HCT116 (cell line): ENCODE measurements at regions of chr5 and their contacts with region 1.

Region 1: DNA sequence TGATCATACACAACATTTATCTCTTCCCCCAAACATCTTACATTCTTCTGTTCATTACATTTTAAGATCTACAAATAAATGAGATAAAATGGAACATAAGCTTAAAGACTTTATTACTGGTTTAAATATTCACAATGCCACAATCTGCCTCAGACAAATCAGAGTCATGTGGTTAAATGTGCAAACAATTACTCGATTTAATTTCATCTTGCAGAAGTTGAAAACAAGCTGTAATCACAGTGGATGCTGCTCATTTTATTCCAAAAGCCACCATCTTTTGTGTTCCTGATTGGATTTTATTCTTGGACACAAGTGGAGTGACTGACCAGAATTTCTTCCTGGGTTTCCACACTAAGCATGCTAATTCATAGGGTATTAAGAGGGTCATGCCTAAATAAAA is 33.2 kb downstream of the SPOCK1 start:
- DNase-seq: no peak
- ATAC-seq: no peak
- H3K4me3 ChIP-seq: no peak overlapping the region
- H3K27ac ChIP-seq: no peak overlapping the region
- H3K4me1 ChIP-seq: no peaks in the 10 kb centered on the region
- H3K27me3 ChIP-seq: peaks cover 47% of the 10 kb centered on the region
- CTCF ChIP-seq: no peak
- POLR2A ChIP-seq: no peak
- RAD21 ChIP-seq: no peak

Region 2: DNA sequence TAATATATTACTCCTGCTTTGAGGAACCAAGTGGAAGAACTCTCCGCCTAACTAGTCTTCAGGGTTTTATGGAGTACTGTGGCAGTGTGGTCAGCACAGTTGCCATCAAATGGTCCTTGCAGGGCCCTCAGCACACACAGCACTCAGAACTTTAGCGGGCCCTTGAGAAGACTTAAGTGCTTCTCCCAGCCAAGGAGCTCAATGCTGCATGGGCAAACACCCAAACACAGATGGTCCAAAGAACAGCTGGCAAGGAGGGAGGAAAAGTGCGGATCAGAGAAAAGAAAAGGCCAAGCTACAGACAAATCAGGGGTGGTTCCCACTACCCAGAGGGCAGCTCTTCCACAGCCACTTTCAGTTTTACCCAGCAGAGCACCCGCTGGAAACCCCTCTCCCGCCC is 65.4 kb before region 1 on chr5:
- CTCF ChIA-PET with region 1: no interaction called
- POLR2A ChIA-PET with region 1: no interaction called
- RAD21 ChIA-PET with region 1: no interaction called
- intact Hi-C with region 1: no loop called
- DNase-seq: no peak
- ATAC-seq: no peak
- H3K4me3 ChIP-seq: no peak overlapping the region
- H3K27ac ChIP-seq: no peak overlapping the region
- H3K4me1 ChIP-seq: no peaks in the 10 kb centered on the region
- H3K27me3 ChIP-seq: peaks cover 58% of the 10 kb centered on the region
- CTCF ChIP-seq: no peak
- POLR2A ChIP-seq: no peak
- RAD21 ChIP-seq: no peak

Region 3: GRCh38 chr5:137453485-137454080 is 12.3 kb before region 1 on chr5:
- CTCF ChIA-PET with region 1: no interaction called
- POLR2A ChIA-PET with region 1: no interaction called
- RAD21 ChIA-PET with region 1: no interaction called
- intact Hi-C with region 1: no loop called
- DNase-seq: peak; percentile 12
- ATAC-seq: no peak
- H3K4me3 ChIP-seq: no peak overlapping the region
- H3K27ac ChIP-seq: no peak overlapping the region
- H3K4me1 ChIP-seq: no peaks in the 10 kb centered on the region
- H3K27me3 ChIP-seq: peaks cover 23% of the 10 kb centered on the region
- CTCF ChIP-seq: no peak
- POLR2A ChIP-seq: no peak
- RAD21 ChIP-seq: no peak

Region 4: GRCh38 chr5:137492331-137492730 is 26.4 kb after region 1 on chr5:
- CTCF ChIA-PET with region 1: no interaction called
- POLR2A ChIA-PET with region 1: no interaction called
- RAD21 ChIA-PET with region 1: no interaction called
- intact Hi-C with region 1: loop called (anchors 2 kb)
- DNase-seq: no peak
- ATAC-seq: no peak
- H3K4me3 ChIP-seq: no peak overlapping the region
- H3K27ac ChIP-seq: no peak overlapping the region
- H3K4me1 ChIP-seq: no peaks in the 10 kb centered on the region
- H3K27me3 ChIP-seq: peaks cover 25% of the 10 kb centered on the region
- CTCF ChIP-seq: no peak
- POLR2A ChIP-seq: no peak
- RAD21 ChIP-seq: no peak